Right cardiac atrium (tissue), 5 donors: ENCODE measurements at regions of chr11 and their contacts with region 1.

Region 1: DNA sequence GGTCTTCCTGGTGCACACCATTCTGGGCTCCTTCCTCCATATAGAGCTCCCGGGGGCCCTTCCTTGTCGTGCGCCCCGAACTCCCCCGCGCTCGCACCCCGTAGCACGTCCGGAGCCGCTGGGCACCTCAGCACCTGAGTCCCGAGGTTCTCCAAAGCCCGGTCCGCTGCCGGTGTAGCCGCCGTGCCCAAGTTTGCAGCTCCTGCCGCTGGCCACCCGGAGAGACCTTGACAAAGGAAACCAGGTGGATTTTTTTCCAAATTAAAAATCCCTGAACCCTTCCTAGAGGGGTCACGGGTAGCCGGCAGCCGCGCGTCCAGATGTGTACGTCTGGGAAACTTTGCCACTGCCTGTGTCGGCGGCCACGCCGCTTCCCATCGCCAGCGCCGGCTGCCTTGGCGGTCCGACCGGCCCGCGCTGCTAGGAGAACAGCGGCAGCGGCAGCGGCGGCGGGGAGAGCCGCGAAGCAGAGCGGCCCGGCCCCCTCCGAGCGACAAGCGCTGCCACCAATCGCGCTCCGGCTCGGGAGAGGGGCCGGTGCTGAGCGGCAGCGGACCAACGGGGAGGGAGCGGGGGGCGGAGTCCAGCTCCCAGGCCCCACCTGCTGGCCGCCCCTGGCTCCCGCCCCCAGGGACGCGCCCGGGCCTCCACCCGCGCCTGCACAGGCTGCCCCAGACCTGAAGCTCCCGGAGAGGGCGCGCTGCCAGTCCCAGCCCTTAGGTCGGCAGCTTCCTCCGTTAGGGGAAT is at the start of gene GALNT18:
- DNase-seq: peak; percentile 94 to 97 (median 97)
- ATAC-seq: peak; percentile 98
- H3K4me3 ChIP-seq: peak within 1 kb of the TSS; percentile 76
- H3K27ac ChIP-seq: peak within 1 kb of the TSS; percentile 77
- H3K4me1 ChIP-seq: peaks cover 3% of the 10 kb centered on the region
- H3K27me3 ChIP-seq: no peaks in the 10 kb centered on the region
- total RNA-seq, gene GALNT18: 17.5 to 32.2 (median 25.5) TPM

Region 2: DNA sequence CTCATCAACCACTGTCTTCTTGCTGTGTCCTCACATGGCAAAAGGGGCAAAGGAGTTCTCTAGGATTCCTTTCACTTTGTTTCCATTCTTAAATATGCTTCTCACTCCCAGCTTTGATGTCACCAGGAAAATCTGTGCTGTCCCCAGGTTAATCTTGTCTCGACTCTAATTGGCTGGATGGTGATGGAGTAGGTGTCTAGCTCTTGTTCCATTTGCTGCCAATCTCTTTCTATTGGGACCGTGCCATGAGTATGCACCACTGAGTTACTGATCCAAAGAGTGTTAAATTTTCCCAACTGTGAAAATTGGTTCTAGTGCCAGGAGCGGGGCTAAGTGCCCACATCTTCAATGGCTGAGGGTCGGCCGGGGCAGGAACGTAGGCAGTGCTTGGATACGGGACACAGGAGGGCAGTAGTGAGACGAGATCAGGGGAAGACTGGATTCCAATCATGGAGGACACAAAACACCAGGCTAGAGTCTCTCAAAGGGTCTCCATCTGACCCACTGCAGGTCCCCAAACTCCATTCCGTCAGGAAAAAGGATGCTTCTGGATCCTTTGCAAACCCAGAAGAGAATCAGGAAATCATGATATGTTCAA is 221.0 kb before region 1 on chr11:
- intact Hi-C with region 1: loop called in 2 of 4 experiments (anchors 10 kb)
- DNase-seq: peak in 1 of 3 donors; percentile 60
- ATAC-seq: peak in 1 of 2 donors; percentile 28
- H3K4me3 ChIP-seq: no peak overlapping the region
- H3K27ac ChIP-seq: no peak overlapping the region
- H3K4me1 ChIP-seq: peaks cover 4% of the 10 kb centered on the region
- H3K27me3 ChIP-seq: no peaks in the 10 kb centered on the region

Region 3: DNA sequence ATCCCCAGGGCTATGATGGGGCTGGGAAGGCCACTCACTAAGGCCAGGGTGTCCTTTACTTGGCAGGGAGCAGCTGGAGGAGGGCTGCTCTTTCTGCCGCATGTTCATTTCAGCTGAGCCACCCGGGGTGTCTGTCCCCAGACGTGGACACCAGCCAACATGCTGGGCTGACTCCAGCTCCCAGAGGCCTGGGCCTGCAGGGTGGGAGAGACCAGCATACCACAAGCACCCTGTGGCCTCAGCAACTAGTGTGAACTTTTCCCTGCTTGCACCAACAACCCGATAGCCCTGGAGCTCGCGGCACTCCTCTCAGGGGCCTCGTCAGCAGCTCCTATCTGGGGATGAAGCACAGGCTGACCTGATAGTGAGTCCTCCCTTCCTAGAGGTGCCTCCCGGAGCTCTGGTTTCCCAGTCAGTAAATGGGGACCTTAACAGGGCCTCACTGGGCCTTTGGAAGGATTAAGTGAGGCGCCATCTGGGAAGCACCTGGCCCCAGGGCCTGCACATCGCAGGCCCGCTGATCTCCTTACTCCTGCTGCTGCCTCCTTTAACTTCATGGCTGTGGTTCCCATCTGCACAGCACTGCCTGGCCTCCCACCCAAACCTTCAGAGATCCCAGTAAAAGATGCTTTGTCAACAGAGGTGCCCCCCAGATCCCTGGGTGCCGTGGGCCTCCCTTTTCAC is 83.3 kb before region 1 on chr11:
- intact Hi-C with region 1: loop called in 2 of 4 experiments (anchors 5 to 10 kb)
- DNase-seq: peak; percentile 59 to 92 (median 85)
- ATAC-seq: peak; percentile 70 to 82
- H3K4me3 ChIP-seq: no peak overlapping the region
- H3K27ac ChIP-seq: peak overlapping the region; percentile 65
- H3K4me1 ChIP-seq: peaks cover 18% of the 10 kb centered on the region
- H3K27me3 ChIP-seq: no peaks in the 10 kb centered on the region